ENCODE measurements at regions of chr12 and their contacts with region 1.

Region 1: GRCh38 chr12:53251477-53252348 is 16.4 kb upstream of the ESPL1 start:
- DNase-seq: peak; percentile 81
- ATAC-seq: peak; percentile 90
- H3K4me3 Mint-ChIP-seq: peak overlapping the region; percentile 83
- H3K27ac Mint-ChIP-seq: peak overlapping the region; percentile 95
- H3K4me1 Mint-ChIP-seq: peaks cover 39% of the 10 kb centered on the region
- H3K27me3 Mint-ChIP-seq: no peaks in the 10 kb centered on the region
- CTCF ChIP-seq: peak; percentile 47

Region 2: DNA sequence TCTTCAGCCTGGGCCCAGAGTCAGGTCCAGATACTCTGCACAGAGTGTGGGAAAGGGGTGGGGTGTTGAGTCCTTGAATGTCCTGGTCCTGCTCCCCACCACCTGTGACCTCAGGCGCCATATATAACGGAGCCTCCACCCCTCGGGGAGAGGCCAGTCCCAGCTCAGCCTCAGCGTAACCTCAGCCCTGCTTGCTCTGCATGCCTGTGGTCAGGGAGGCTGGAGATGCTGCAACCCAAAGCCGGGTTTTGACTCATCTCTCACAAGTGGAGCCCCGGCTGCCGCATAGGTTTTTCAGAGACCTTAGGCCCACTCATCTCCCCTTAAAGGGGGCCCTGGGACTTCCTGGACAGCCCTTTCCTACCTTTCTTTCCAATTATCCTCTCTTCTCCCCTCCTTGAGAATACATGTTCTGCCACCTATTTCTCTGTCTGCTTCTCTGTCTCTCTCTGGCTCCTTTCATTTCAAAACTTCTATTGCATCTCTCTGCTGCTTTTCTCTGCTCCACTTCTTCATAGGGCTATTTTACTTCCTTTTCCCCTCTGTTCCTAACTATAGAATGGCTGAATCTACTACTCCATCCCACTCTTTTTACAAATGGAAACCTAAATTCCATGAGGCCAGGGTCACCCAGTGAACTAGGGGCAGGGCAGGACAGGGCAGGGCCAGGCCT is 45.8 kb before region 1 on chr12:
- CTCF ChIA-PET with region 1: interaction called, 100 read pairs
- POLR2A ChIA-PET with region 1: interaction called, 8 read pairs
- intact Hi-C with region 1: no loop called
- DNase-seq: peak; percentile 92
- ATAC-seq: peak; percentile 72
- H3K4me3 Mint-ChIP-seq: peak overlapping the region; percentile 93
- H3K27ac Mint-ChIP-seq: peak overlapping the region; percentile 91
- H3K4me1 Mint-ChIP-seq: peaks cover 68% of the 10 kb centered on the region
- H3K27me3 Mint-ChIP-seq: no peaks in the 10 kb centered on the region
- CTCF ChIP-seq: no peak